Colonic mucosa (tissue), 4 donors: ENCODE measurements at regions of chr10 and their contacts with region 1.

Region 1: DNA sequence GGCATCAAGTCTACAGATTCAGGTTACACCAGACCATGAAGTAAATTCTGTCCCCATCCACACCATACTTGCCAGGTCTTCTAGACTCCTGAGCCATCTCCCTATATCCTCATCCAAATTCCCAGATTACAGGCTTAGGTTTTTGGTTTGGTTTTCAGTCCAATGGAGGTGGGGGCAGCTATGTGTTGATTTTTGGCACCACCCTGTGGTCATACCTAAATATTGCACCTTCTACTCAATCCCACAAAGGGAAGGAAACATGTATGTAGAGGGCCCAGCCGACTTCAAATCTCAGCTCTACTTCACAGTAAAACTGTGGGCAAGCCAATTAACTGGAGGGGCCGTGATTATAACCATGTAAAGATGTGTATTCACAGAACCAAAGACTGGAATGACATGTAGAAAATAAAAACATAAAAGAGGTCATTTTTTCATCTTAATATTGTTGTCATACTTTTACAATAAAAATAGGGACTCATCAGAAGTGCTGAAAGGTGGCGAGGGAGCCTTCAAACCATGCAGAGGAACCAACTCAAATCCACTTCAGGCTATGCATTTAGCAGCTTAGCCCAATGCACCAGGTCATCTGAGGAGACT is 19.8 kb downstream of the ERCC6 start:
- DNase-seq: no peak
- H3K4me3 ChIP-seq: no peak overlapping the region
- H3K27ac ChIP-seq: no peak overlapping the region
- H3K4me1 ChIP-seq: no peaks in the 10 kb centered on the region
- H3K27me3 ChIP-seq: no peaks in the 10 kb centered on the region
- CTCF ChIP-seq: peak; percentile 54

Region 2: GRCh38 chr10:48885383-48885782 is 633.7 kb before region 1 on chr10:
- intact Hi-C with region 1: loop called (anchors 10 kb)
- DNase-seq: no peak
- H3K4me3 ChIP-seq: no peak overlapping the region
- H3K27ac ChIP-seq: no peak overlapping the region
- H3K4me1 ChIP-seq: no peaks in the 10 kb centered on the region
- H3K27me3 ChIP-seq: no peaks in the 10 kb centered on the region
- CTCF ChIP-seq: peak; percentile 25

Region 3: DNA sequence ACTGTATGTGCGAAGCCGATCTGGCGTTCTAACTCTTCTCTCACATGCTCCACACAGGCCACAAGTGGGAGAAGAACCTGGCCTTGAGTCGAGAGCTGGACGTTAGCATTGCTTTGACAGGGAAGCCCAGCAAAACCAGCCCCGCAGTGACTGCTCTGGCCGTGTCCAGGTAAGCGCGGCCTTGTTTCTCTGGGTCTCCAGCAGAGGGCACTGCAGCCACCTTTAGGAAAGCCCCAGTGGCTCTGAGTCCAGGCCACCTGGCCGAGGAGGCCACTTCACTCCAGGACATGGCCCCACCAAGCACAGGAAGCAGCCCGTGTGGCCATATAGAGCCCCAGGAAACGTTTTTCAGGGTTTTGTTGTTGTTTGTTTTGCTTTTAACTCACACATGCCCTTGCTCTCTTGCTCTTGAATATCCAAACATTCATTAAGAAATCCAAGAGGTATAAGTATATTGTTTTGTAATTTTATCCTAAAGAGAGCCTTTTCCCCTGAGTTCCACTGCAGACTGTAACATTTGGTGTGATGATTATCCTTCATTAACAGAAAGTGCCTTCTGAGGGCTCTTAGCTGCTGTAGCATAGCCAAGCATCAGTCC is 537.7 kb before region 1 on chr10:
- intact Hi-C with region 1: loop called (anchors 10 kb)
- DNase-seq: peak; percentile 51
- H3K4me3 ChIP-seq: no peak overlapping the region
- H3K27ac ChIP-seq: no peak overlapping the region
- H3K4me1 ChIP-seq: no peaks in the 10 kb centered on the region
- H3K27me3 ChIP-seq: no peaks in the 10 kb centered on the region
- CTCF ChIP-seq: peak; percentile 74

Region 4: DNA sequence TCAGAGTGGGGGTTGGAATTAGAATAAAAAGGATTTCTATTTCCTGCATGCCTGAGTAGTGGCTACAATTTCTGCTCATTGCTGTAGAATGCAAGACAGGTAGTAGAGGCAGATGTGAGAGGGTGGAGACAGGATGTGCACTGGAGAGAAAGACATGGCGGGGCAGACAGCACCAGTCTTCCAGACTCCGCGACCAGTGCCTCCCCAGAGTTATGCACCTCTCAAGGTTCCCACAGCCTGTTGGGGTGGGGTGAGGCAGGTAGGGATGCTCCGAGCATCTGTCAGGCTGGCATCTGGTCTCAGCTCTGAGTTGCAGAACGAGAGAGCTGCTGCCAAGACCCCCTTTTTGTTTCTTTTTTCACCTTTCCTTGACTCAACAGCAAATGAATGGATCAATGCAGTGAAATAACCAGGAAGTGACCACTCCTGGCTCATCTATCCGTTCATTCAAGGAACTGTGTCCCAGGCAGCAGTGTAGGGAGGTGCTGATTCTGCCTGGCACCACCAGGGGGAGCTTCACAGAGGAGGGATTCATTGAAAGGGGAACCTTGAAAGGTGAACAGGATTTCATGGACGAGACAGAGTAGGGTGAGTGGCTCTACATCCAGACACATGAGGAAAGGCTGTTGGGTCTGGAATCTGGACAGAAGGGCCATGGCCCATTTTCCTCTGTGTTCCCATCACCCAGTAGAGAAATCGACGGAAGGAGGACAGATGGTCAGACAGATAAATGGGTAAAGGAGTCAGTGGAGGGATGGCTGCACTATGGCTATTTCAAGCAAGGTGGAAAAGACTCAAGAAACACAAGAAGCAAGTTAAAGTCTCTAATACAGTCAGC is 73.9 kb after region 1 on chr10:
- intact Hi-C with region 1: no loop called
- DNase-seq: peak; percentile 65
- H3K4me3 ChIP-seq: no peak overlapping the region
- H3K27ac ChIP-seq: no peak overlapping the region
- H3K4me1 ChIP-seq: no peaks in the 10 kb centered on the region
- H3K27me3 ChIP-seq: no peaks in the 10 kb centered on the region
- CTCF ChIP-seq: peak; percentile 93